CD14-positive monocyte (primary cell): ENCODE measurements at regions of chr2 and their contacts with region 1.

Region 1: DNA sequence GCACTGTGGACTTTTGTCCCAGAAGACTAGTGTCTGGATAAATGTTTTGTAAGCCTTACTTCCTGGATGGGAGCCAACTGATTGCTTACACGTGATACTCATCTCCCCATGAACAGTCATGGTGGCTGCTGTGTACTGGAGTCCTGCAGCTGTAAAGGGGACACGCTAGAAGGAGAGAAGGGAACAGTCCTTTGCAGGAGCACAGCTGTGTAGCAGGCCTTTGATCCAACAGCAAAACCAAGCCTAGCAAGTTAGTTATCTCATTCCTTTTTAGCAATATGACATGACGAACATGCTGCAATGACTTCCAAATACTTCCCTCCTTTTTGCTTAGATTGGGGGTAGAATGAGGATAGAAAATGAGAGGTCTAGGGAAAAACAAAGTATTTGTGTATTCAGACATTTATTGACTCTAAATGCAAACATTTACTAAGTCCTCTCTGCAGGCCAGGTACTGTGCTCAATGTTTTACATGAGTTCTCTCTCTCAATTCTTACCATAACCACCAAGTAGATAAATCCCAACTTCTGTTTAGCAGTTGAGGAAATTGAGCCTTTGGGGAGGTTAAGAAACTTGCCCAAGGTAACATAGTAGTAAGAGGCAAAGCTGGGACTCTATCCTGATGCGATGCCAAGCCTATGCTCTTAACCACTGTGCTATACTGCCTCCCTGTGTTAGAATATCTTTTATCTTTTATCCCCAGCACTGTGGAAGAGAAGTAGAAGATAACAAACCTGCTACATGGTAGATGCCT is 55.4 kb upstream of the CD28 start:
- DNase-seq: peak; percentile 45 to 78 (median 71)
- H3K4me3 ChIP-seq: peak overlapping the region in 1 of 3 experiments; percentile 37
- H3K4me3 Mint-ChIP-seq: peak overlapping the region in 1 of 2 donors; percentile 77
- H3K27ac ChIP-seq: peak overlapping the region; percentile 77 to 92
- H3K27ac Mint-ChIP-seq: peak overlapping the region; percentile 96 to 99 (median 97)
- H3K4me1 ChIP-seq: peaks cover 32 to 37% of the 10 kb centered on the region in 2 donors
- H3K4me1 Mint-ChIP-seq: peaks cover 50% of the 10 kb centered on the region
- H3K27me3 ChIP-seq: no peaks in the 10 kb centered on the region
- H3K27me3 Mint-ChIP-seq: peaks cover 0 to 7% (median 5%) of the 10 kb centered on the region in 3 donors
- CTCF ChIP-seq: peak; percentile 42

Region 2: DNA sequence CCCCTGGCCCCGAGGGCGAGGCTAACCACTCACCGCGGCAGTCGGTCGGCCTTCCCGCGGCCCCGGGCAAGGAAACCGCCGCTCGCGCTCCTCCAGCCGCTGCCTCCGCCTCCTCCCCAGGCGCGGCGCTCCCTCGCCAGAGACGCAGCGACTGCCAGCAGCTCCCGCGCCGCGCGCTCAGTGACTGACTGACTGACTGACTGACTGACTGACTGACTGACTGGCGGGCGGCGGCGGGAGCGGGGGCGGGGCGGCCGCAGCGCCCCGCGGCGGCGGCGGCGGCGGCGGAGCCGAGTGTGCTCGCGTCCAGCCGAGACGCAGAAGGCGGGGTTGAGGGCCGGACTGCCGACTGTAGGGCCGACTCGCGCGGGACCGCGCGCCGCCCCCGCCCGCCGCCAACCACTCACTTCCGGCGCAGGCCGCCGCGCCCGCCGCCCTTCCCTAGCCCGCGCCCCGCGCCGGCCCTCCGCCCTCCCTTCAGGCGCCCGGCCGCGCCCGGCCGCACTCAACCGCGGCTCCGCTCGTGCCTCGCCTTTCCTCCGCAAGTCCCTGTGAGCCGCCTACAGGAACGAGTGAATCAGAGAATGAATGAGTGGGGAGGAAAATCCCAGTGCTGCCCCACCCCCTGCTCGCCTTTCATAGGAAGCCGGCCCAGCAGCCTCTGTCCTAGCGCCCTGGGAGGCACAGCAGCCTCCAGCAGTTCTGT is 115.8 kb before region 1 on chr2 and contains the start of gene RAPH1:
- intact Hi-C with region 1: loop called in 1 of 2 experiments (anchors 10 kb)
- DNase-seq: peak; percentile 69 to 90 (median 80)
- H3K4me3 ChIP-seq: peak within 1 kb of the TSS; percentile 77 to 85 (median 85)
- H3K4me3 Mint-ChIP-seq: peak within 1 kb of the TSS; percentile 86 to 95
- H3K27ac ChIP-seq: peak within 1 kb of the TSS; percentile 22 to 50
- H3K27ac Mint-ChIP-seq: peak within 1 kb of the TSS; percentile 38 to 89 (median 76)
- H3K4me1 ChIP-seq: peaks cover 23 to 24% of the 10 kb centered on the region in 2 donors
- H3K4me1 Mint-ChIP-seq: peaks cover 27% of the 10 kb centered on the region
- H3K27me3 ChIP-seq: peaks cover 55 to 64% of the 10 kb centered on the region in 2 donors
- H3K27me3 Mint-ChIP-seq: peaks cover 55 to 81% (median 67%) of the 10 kb centered on the region in 3 donors
- CTCF ChIP-seq: no peak
- polyA plus RNA-seq, gene RAPH1: 3.8 to 5.1 (median 4.5) TPM

Region 3: DNA sequence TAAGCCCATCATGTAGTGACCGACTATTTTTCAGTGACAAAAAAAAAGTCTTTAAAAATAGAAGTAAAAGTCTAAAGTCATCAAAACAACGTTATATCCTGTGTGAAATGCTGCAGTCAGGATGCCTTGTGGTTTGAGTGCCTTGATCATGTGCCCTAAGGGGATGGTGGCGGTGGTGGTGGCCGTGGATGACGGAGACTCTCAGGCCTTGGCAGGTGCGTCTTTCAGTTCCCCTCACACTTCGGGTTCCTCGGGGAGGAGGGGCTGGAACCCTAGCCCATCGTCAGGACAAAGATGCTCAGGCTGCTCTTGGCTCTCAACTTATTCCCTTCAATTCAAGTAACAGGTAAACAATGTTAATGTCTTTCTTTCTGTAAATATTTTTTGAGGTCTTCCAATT is 55.4 kb after region 1 on chr2 and contains the start of gene CD28:
- intact Hi-C with region 1: no loop called
- DNase-seq: peak in 1 of 3 donors; percentile 20
- H3K4me3 ChIP-seq: no peak within 1 kb of the TSS
- H3K4me3 Mint-ChIP-seq: peak within 1 kb of the TSS; percentile 9 to 42
- H3K27ac ChIP-seq: no peak within 1 kb of the TSS
- H3K27ac Mint-ChIP-seq: peak within 1 kb of the TSS in 3 of 7 donors; percentile 7 to 80 (median 30)
- H3K4me1 ChIP-seq: peaks cover 0 to 7% of the 10 kb centered on the region in 2 donors
- H3K4me1 Mint-ChIP-seq: peaks cover 9% of the 10 kb centered on the region
- H3K27me3 ChIP-seq: no peaks in the 10 kb centered on the region
- H3K27me3 Mint-ChIP-seq: peaks cover 0 to 2% (median 0%) of the 10 kb centered on the region in 3 donors
- CTCF ChIP-seq: no peak
- polyA plus RNA-seq, gene CD28: 0.09 to 0.21 TPM in 2 of 3 donors, not detected in the other

Region 4: GRCh38 chr2:203814661-203815540 is 163.9 kb after region 1 on chr2:
- intact Hi-C with region 1: loop called (anchors 5 to 10 kb)
- DNase-seq: peak; percentile 79 to 90 (median 84)
- H3K4me3 ChIP-seq: peak overlapping the region in 1 of 3 experiments; percentile 26
- H3K4me3 Mint-ChIP-seq: peak overlapping the region; percentile 45 to 67
- H3K27ac ChIP-seq: no peak overlapping the region
- H3K27ac Mint-ChIP-seq: peak overlapping the region; percentile 18 to 74 (median 73)
- H3K4me1 ChIP-seq: peaks cover 57 to 69% of the 10 kb centered on the region in 2 donors
- H3K4me1 Mint-ChIP-seq: peaks cover 69% of the 10 kb centered on the region
- H3K27me3 ChIP-seq: no peaks in the 10 kb centered on the region
- H3K27me3 Mint-ChIP-seq: peaks cover 0 to 9% (median 4%) of the 10 kb centered on the region in 3 donors
- CTCF ChIP-seq: peak; percentile 83

Region 5: GRCh38 chr2:203878063-203878462 is 227.0 kb after region 1 on chr2:
- intact Hi-C with region 1: no loop called
- DNase-seq: no peak
- H3K4me3 ChIP-seq: no peak overlapping the region
- H3K4me3 Mint-ChIP-seq: no peak overlapping the region
- H3K27ac ChIP-seq: no peak overlapping the region
- H3K27ac Mint-ChIP-seq: peak overlapping the region in 1 of 7 donors; percentile 35
- H3K4me1 ChIP-seq: peaks cover 17 to 24% of the 10 kb centered on the region in 2 donors
- H3K4me1 Mint-ChIP-seq: peaks cover 4% of the 10 kb centered on the region
- H3K27me3 ChIP-seq: no peaks in the 10 kb centered on the region
- H3K27me3 Mint-ChIP-seq: peaks cover 0 to 3% (median 0%) of the 10 kb centered on the region in 3 donors
- CTCF ChIP-seq: no peak

Region 6: GRCh38 chr2:203893401-203893800 is 242.4 kb after region 1 on chr2:
- intact Hi-C with region 1: loop called in 1 of 2 experiments (anchors 10 kb)
- DNase-seq: peak in 1 of 3 donors; percentile 17
- H3K4me3 ChIP-seq: no peak overlapping the region
- H3K4me3 Mint-ChIP-seq: no peak overlapping the region
- H3K27ac ChIP-seq: no peak overlapping the region
- H3K27ac Mint-ChIP-seq: peak overlapping the region in 1 of 7 donors; percentile 75
- H3K4me1 ChIP-seq: peaks cover 90 to 96% of the 10 kb centered on the region in 2 donors
- H3K4me1 Mint-ChIP-seq: peaks cover 85% of the 10 kb centered on the region
- H3K27me3 ChIP-seq: no peaks in the 10 kb centered on the region
- H3K27me3 Mint-ChIP-seq: no peaks in the 10 kb centered on the region
- CTCF ChIP-seq: no peak